Naive thymus-derived CD4-positive, alpha-beta T cell (primary cell): ENCODE measurements at regions of chr12 and their contacts with region 1.

Region 1: DNA sequence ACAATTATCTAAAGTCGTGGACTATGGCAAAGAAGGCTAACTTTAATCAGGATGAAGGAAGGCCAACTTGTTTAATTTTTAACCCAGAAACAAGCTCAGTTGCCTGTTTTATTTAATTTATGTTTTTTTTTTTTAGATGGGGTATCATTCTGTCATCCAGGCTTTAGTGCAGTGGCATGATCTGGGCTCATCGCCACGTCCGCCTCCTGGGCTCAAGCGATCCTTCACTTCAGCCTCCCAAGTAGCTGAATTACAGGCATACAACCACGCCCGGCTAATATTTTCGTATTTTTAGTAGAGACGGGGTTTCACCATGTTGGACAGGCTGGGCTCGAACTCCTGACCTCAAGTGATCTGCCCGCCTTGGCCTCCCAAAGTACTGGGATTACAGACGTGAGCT is 19.7 kb downstream of the NUDT4 start:
- DNase-seq: no peak
- ATAC-seq: no peak
- H3K4me3 ChIP-seq: no peak overlapping the region
- H3K4me3 Mint-ChIP-seq: no peak overlapping the region
- H3K27ac ChIP-seq: no peak overlapping the region
- H3K27ac Mint-ChIP-seq: peak overlapping the region in 1 of 9 donors; percentile 25
- H3K4me1 ChIP-seq: no peaks in the 10 kb centered on the region
- H3K4me1 Mint-ChIP-seq: peaks cover 0 to 8% (median 5%) of the 10 kb centered on the region in 7 donors
- H3K27me3 ChIP-seq: no peaks in the 10 kb centered on the region
- H3K27me3 Mint-ChIP-seq: no peaks in the 10 kb centered on the region

Region 2: GRCh38 chr12:92485351-92486348 is 911.8 kb before region 1 on chr12:
- CTCF ChIA-PET with region 1: no interaction called
- POLR2A ChIA-PET with region 1: no interaction called
- intact Hi-C with region 1: no loop called
- DNase-seq: no peak
- ATAC-seq: no peak
- H3K4me3 ChIP-seq: no peak overlapping the region
- H3K4me3 Mint-ChIP-seq: no peak overlapping the region
- H3K27ac ChIP-seq: no peak overlapping the region
- H3K27ac Mint-ChIP-seq: peak overlapping the region in 6 of 9 donors; percentile 2 to 69 (median 42)
- H3K4me1 ChIP-seq: no peaks in the 10 kb centered on the region
- H3K4me1 Mint-ChIP-seq: peaks cover 6 to 27% (median 9%) of the 10 kb centered on the region in 7 donors
- H3K27me3 ChIP-seq: no peaks in the 10 kb centered on the region
- H3K27me3 Mint-ChIP-seq: no peaks in the 10 kb centered on the region

Region 3: GRCh38 chr12:93025145-93025805 is 372.1 kb before region 1 on chr12:
- CTCF ChIA-PET with region 1: no interaction called
- POLR2A ChIA-PET with region 1: no interaction called
- intact Hi-C with region 1: loop called (anchors 1 to 2 kb)
- DNase-seq: peak in 3 of 9 donors; percentile 2 to 15 (median 4)
- ATAC-seq: peak; percentile 56
- H3K4me3 ChIP-seq: no peak overlapping the region
- H3K4me3 Mint-ChIP-seq: no peak overlapping the region
- H3K27ac ChIP-seq: no peak overlapping the region
- H3K27ac Mint-ChIP-seq: no peak overlapping the region
- H3K4me1 ChIP-seq: no peaks in the 10 kb centered on the region
- H3K4me1 Mint-ChIP-seq: no peaks in the 10 kb centered on the region
- H3K27me3 ChIP-seq: no peaks in the 10 kb centered on the region
- H3K27me3 Mint-ChIP-seq: peaks cover 0 to 3% (median 0%) of the 10 kb centered on the region in 5 donors

Region 4: GRCh38 chr12:93292741-93293566 is 104.5 kb before region 1 on chr12:
- CTCF ChIA-PET with region 1: no interaction called
- POLR2A ChIA-PET with region 1: no interaction called
- intact Hi-C with region 1: no loop called
- DNase-seq: no peak
- ATAC-seq: no peak
- H3K4me3 ChIP-seq: no peak overlapping the region
- H3K4me3 Mint-ChIP-seq: no peak overlapping the region
- H3K27ac ChIP-seq: no peak overlapping the region
- H3K27ac Mint-ChIP-seq: no peak overlapping the region
- H3K4me1 ChIP-seq: no peaks in the 10 kb centered on the region
- H3K4me1 Mint-ChIP-seq: peaks cover 0 to 6% (median 5%) of the 10 kb centered on the region in 7 donors
- H3K27me3 ChIP-seq: no peaks in the 10 kb centered on the region
- H3K27me3 Mint-ChIP-seq: no peaks in the 10 kb centered on the region